ENCODE measurements at regions of chr1 and their contacts with region 1.

Region 1: GRCh38 chr1:26169669-26170471 is at the start of gene ZNF593:
- DNase-seq: peak; percentile 94
- ATAC-seq: peak; percentile 96
- H3K4me3 Mint-ChIP-seq: peak within 1 kb of the TSS; percentile 95
- H3K27ac Mint-ChIP-seq: peak within 1 kb of the TSS; percentile 88
- H3K4me1 Mint-ChIP-seq: peaks cover 10% of the 10 kb centered on the region
- H3K27me3 Mint-ChIP-seq: no peaks in the 10 kb centered on the region
- total RNA-seq, gene ZNF593: 44.6 to 56.3 TPM

Region 2: DNA sequence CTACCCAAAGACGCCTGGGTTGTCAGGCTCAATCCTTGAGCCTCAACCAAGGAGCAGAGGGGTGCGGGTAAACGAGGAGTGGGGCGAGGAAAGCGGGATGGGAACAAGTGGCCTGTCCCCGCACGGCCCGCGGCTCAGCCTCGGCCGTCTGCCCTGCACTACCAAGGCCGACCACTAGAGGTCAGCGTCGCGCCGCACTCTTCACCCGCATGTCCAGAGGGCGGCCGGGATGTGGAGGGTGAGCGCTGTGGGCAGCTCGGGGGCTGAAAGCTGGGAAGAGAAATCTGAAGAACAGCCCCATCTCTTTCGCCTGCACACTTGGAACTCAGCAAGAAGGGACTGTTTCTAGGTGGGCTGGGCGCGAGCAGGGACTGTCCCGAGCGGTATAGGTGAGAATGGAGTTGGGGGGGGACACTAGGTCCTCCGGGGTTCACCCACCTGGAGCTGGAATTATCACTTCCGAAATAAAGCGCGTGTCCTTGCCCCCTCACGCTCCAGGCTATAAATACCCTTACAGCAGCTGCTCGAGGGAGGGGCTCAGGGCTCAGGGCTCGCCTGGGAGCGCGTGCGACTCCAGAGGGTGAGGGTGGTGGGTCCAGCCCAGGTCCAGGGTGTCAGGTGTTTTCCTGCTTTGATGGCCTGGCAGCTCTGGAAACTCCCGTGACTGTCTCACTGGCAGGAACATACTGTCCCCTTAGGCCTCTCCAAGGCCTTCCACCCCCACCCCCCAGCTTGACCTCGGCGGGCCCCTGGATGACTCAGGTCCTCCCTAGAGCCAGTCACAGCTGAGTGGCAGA is 133.7 kb before region 1 on chr1:
- CTCF ChIA-PET with region 1: interaction called, 6 read pairs
- POLR2A ChIA-PET with region 1: no interaction called
- intact Hi-C with region 1: loop called (anchors 1 to 5 kb)
- DNase-seq: peak; percentile 86
- ATAC-seq: peak; percentile 76
- H3K4me3 Mint-ChIP-seq: peak overlapping the region; percentile 80
- H3K27ac Mint-ChIP-seq: peak overlapping the region; percentile 78
- H3K4me1 Mint-ChIP-seq: peaks cover 13% of the 10 kb centered on the region
- H3K27me3 Mint-ChIP-seq: peaks cover 6% of the 10 kb centered on the region

Region 3: DNA sequence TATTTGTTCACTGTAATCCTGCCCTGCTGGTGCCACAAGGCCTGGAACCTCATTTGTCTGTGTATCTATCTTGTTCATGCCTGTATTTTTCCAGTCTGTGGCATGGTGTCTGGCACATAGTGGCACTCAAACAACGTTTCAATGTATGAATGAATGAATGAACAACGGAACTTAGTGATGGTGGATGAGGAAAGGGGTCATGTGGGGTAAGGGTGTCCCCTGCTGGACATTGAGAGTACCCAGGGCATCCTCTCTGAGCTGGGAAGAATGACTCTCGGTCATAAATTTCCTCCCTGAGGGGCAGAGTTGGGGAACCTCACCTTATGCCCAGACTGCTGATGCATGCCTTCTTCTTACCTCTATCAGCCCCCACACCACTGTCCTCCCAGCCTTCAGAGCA is 221.6 kb after region 1 on chr1:
- CTCF ChIA-PET with region 1: no interaction called
- POLR2A ChIA-PET with region 1: no interaction called
- intact Hi-C with region 1: loop called in 1 of 2 experiments (anchors 1 kb)
- DNase-seq: peak; percentile 57
- ATAC-seq: peak; percentile 74
- H3K4me3 Mint-ChIP-seq: no peak overlapping the region
- H3K27ac Mint-ChIP-seq: no peak overlapping the region
- H3K4me1 Mint-ChIP-seq: peaks cover 28% of the 10 kb centered on the region
- H3K27me3 Mint-ChIP-seq: no peaks in the 10 kb centered on the region